Endothelial cell of umbilical vein (primary cell): ENCODE measurements at regions of chr7 and their contacts with region 1.

Region 1: GRCh38 chr7:55593515-55594318 is 21.4 kb upstream of the VOPP1 start:
- DNase-seq: peak; percentile 41
- H3K4me3 ChIP-seq: no peak overlapping the region
- H3K27ac ChIP-seq: no peak overlapping the region
- H3K4me1 ChIP-seq: peaks cover 8% of the 10 kb centered on the region
- H3K27me3 ChIP-seq: peaks cover 0 to 2% of the 10 kb centered on the region in 2 experiments
- CTCF ChIP-seq: peak; percentile 75 to 79
- POLR2A ChIP-seq: no peak

Region 2: DNA sequence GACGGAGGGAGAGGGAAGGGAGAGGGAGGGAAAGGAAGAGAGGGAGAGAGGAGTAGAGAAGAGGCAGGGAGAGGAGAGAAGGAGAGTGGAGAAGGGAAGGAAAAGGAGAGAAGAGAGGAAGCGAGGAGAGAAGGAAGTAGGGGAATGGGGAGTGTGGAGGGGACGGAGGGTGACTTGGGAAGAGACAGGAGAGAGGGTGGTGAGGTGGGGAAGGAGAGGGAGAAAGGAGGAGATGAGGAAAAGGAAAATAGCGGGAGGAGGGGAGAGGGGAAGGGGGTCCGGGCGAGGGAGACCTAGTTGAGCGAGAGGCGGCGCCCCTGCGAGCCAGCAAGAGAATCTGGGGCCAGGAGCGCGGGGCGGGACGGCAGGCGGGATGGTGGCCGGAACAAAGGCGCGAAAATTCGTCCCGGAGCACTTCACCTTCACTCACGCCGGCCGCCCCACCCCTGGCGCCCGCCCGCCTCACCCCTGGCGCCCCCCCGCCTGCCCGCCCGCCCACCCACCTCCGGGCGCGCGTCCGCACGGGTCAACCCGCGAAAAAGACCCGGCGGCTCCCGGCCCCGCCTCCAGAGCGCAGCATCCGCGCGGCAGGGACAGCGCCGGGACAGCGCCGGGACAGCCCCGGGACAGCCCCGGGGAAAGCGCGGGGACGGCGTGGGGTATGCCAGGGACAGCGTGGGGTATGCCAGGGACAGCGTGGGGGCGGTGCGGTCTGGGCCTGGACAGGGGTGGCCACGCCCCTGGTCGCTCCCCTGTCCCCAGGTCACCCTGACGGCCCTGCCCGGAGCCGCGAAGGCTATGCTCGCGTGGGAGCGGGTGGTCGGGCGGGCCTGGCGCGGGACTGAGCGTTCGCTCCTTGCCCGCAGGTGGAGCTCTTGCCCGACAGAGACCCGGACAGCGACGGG is 1047.4 kb before region 1 on chr7:
- CTCF ChIA-PET with region 1: no interaction called
- POLR2A ChIA-PET with region 1: no interaction called
- dilution Hi-C with region 1: no loop called
- intact Hi-C with region 1: no loop called
- DNase-seq: peak; percentile 2
- H3K4me3 ChIP-seq: peak overlapping the region in 1 of 3 experiments; percentile 17
- H3K27ac ChIP-seq: no peak overlapping the region
- H3K4me1 ChIP-seq: no peaks in the 10 kb centered on the region
- H3K27me3 ChIP-seq: peaks cover 20 to 46% of the 10 kb centered on the region in 2 experiments
- CTCF ChIP-seq: peak in 1 of 2 donors; percentile 25
- POLR2A ChIP-seq: no peak

Region 3: GRCh38 chr7:55280031-55280454 is 313.7 kb before region 1 on chr7:
- CTCF ChIA-PET with region 1: interaction called, 7 read pairs
- POLR2A ChIA-PET with region 1: no interaction called
- dilution Hi-C with region 1: no loop called
- intact Hi-C with region 1: loop called (anchors 2 kb)
- DNase-seq: peak; percentile 67
- H3K4me3 ChIP-seq: no peak overlapping the region
- H3K27ac ChIP-seq: no peak overlapping the region
- H3K4me1 ChIP-seq: no peaks in the 10 kb centered on the region
- H3K27me3 ChIP-seq: peaks cover 0 to 3% of the 10 kb centered on the region in 2 experiments
- CTCF ChIP-seq: peak; percentile 48 to 51
- POLR2A ChIP-seq: no peak

Region 4: DNA sequence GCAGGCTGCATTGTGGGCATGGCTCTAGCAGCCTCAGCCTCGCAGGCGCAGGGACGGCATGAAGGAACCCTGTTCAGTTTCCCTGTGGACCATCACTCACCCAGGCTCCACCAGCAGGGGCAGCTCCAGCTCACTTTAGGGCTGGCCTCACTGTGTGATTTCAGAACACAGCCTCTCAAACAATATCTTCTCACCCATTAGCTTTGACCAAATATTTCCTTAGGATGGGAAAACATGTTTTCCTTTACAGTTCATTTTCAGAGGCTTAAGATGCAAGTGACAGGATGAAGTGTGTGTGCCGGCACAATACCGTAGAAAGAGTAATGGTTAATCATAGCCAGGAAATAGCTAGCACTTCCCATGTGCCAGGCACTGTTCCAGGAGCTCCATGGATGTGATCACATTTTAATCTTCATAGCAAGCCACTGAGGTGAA is 170.4 kb before region 1 on chr7:
- CTCF ChIA-PET with region 1: interaction called, 12 read pairs
- POLR2A ChIA-PET with region 1: no interaction called
- dilution Hi-C with region 1: no loop called
- intact Hi-C with region 1: no loop called
- DNase-seq: peak; percentile 68
- H3K4me3 ChIP-seq: peak overlapping the region in 1 of 3 experiments; percentile 11
- H3K27ac ChIP-seq: peak overlapping the region; percentile 29
- H3K4me1 ChIP-seq: peaks cover 21% of the 10 kb centered on the region
- H3K27me3 ChIP-seq: no peaks in the 10 kb centered on the region
- CTCF ChIP-seq: peak in 1 of 2 donors; percentile 56
- POLR2A ChIP-seq: no peak

Region 5: GRCh38 chr7:55432939-55433784 is 160.6 kb before region 1 on chr7:
- CTCF ChIA-PET with region 1: interaction called, 12 read pairs
- POLR2A ChIA-PET with region 1: no interaction called
- dilution Hi-C with region 1: no loop called
- intact Hi-C with region 1: loop called (anchors 1 kb)
- DNase-seq: peak; percentile 36
- H3K4me3 ChIP-seq: no peak overlapping the region
- H3K27ac ChIP-seq: no peak overlapping the region
- H3K4me1 ChIP-seq: no peaks in the 10 kb centered on the region
- H3K27me3 ChIP-seq: no peaks in the 10 kb centered on the region
- CTCF ChIP-seq: peak; percentile 32 to 34
- POLR2A ChIP-seq: no peak

Region 6: GRCh38 chr7:55552320-55553023 is 41.2 kb before region 1 on chr7:
- CTCF ChIA-PET with region 1: interaction called, 3 read pairs
- POLR2A ChIA-PET with region 1: no interaction called
- dilution Hi-C with region 1: no loop called
- intact Hi-C with region 1: loop called (anchors 1 kb)
- DNase-seq: peak; percentile 96
- H3K4me3 ChIP-seq: peak overlapping the region in 2 of 3 experiments; percentile 22 to 43
- H3K27ac ChIP-seq: peak overlapping the region; percentile 82
- H3K4me1 ChIP-seq: peaks cover 49% of the 10 kb centered on the region
- H3K27me3 ChIP-seq: no peaks in the 10 kb centered on the region
- CTCF ChIP-seq: no peak
- POLR2A ChIP-seq: no peak

Region 7: DNA sequence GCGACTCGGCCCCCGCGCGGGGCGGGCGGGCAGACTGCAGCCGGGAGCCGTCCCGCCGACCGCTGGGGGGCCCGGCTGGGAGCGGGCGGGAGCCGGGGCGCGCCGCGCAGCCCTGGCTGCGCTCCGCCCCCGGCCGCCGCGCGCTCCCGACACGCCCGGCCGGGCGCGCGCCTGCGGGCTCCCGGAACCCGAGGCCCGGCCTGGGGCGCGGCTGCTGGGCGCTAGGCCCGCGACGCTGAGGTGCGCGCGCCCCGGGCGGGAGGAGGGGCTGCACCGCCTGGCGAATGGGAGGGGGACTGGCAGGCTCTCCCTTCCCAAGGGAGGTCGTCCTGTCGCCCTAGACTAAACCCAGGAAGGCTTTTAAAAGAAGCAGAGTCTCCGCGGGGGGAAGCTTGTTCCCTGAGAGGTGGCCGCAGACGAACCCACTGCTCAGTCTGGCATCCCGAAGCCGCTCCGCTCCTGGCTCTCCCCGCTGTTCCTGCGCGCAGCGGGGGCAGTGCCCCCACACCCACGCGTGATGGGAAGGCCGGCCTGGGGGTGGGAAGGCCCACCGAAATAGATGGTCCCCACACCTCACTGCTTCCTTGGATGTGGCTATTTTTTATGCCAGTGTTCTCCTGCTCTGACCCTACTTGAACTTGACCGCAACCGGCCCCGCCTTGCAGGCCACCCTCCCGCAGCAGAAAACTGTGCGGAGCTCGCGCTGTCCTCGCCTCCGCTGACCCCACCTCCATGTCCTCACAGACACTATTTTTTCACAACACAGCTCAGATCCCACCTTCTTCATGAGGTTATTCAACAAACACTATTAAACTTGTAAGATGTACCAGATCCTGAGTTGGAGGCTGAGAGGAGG is 21.1 kb before region 1 on chr7 and contains the start of gene VOPP1:
- CTCF ChIA-PET with region 1: interaction called, 6 read pairs
- POLR2A ChIA-PET with region 1: no interaction called
- dilution Hi-C with region 1: no loop called
- intact Hi-C with region 1: loop called (anchors 1 kb)
- DNase-seq: peak; percentile 61
- H3K4me3 ChIP-seq: peak within 1 kb of the TSS; percentile 89 to 99 (median 97)
- H3K27ac ChIP-seq: peak within 1 kb of the TSS; percentile 97
- H3K4me1 ChIP-seq: peaks cover 55% of the 10 kb centered on the region
- H3K27me3 ChIP-seq: no peaks in the 10 kb centered on the region
- CTCF ChIP-seq: no peak
- POLR2A ChIP-seq: peak; percentile 41
- total RNA-seq, gene VOPP1: 154 and 159 TPM in 2 replicates